ENCODE measurements at regions of chr10 and their contacts with region 1.

Region 1: DNA sequence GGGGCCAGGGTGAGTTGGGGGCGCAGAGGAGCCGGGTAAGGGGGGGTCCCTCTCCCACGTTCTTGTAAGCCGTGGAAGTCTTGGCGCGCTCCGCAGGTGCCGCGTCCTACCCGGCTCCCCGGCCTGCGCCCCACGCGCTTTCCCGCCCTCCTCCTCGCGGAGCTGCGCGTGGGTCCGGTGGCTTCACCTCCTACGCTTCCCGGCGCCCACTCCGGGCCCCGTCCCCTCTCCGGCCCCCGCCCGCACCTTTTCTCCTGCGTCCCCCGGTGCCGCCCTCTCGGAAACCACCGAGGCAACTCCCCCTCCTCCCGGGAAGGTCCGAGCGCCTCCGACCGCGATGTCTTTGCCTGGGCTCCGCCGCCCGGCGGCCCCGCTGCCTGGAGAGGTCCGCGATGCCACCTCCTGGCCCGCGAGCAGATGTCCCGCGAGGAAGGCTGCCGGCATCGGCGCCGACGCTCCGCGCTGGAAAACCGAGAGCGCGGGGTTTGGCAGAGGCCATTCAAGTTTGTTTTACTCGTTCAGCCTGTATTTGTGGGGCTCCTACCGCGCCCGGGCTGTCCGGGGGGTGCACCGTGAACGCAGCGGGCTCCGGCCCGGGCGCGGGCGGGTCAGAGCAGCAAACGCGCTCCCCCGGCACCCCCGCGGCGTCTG is 2.4 kb upstream of the NKX6-2 start:
- DNase-seq: peak in 36 of 42 donors; percentile 47 to 87 (median 74)

Region 2: GRCh38 chr10:132654702-132655661 is 133.3 kb before region 1 on chr10:
- intact Hi-C with region 1: loop called (anchors 5 kb)
- DNase-seq: peak in 41 of 42 donors; percentile 68 to 94 (median 83)

Region 3: GRCh38 chr10:132735923-132736391 is 52.3 kb before region 1 on chr10:
- intact Hi-C with region 1: loop called (anchors 5 kb)
- DNase-seq: peak; percentile 79 to 95 (median 88)

Measured in head of caudate nucleus (tissue), 42 donors.